Left lung (tissue), 14 donors: ENCODE measurements at regions of chr20 and their contacts with region 1.

Region 1: GRCh38 chr20:33995053-33995831 is 1.5 kb downstream of the RALY start:
- DNase-seq: peak in 1 of 4 donors; percentile 41
- ATAC-seq: no peak
- H3K4me3 ChIP-seq: peak overlapping the region; percentile 91 to 98
- H3K27ac ChIP-seq: peak overlapping the region; percentile 98
- H3K4me1 ChIP-seq: peaks cover 31 to 77% of the 10 kb centered on the region in 2 donors
- H3K27me3 ChIP-seq: no peaks in the 10 kb centered on the region
- CTCF ChIP-seq: no peak

Region 2: DNA sequence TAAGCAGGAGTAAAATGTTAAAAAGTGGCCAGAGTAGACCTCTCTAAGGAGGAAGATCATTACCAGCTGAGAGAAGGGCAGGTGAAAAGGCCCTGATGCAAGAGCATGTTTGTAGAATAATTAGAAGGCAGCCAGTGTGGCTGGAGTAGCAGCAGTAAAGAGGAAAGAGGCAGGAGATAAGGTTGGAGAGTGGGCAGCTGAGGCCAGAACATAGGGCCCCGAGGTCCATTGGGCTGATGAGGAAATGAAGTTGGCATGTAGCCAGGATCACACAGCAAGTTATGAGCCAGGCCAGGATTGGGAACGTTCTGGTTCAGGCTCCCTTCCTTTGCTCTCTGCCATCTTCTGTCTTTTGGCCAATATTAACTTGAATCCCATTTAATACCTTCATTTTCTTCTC is 50.1 kb after region 1 on chr20:
- intact Hi-C with region 1: loop called in 1 of 2 experiments (anchors 5 kb)
- DNase-seq: no peak
- ATAC-seq: peak; percentile 42
- H3K4me3 ChIP-seq: no peak overlapping the region
- H3K27ac ChIP-seq: no peak overlapping the region
- H3K4me1 ChIP-seq: peaks cover 24 to 79% of the 10 kb centered on the region in 2 donors
- H3K27me3 ChIP-seq: no peaks in the 10 kb centered on the region
- CTCF ChIP-seq: no peak

Region 3: DNA sequence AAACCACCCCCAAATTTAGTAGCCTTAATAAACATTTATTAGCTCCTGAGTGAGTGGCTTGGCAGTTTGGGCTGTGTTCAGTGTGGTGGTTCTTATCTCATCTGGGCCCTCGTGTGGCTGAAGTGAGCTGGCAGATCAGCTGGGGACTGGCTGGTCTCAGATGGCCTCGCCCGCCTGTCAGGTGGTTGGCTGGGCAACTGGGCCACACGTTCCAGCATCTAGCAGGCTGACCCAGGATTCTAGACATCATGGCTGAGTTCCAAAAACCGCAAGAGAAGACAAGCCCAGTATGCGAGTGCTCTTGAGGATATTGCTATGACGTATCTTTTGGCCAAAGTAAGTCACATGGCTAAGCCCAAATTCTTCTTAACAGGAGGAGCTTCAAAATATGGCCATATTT is 87.9 kb after region 1 on chr20:
- intact Hi-C with region 1: no loop called
- DNase-seq: peak in 3 of 4 donors; percentile 36 to 91 (median 90)
- ATAC-seq: peak; percentile 95
- H3K4me3 ChIP-seq: no peak overlapping the region
- H3K27ac ChIP-seq: peak overlapping the region; percentile 50 to 65
- H3K4me1 ChIP-seq: peaks cover 17 to 21% of the 10 kb centered on the region in 2 donors
- H3K27me3 ChIP-seq: no peaks in the 10 kb centered on the region
- CTCF ChIP-seq: no peak